Natural killer cell (primary cell): ENCODE measurements at regions of chr16 and their contacts with region 1.

Region 1: DNA sequence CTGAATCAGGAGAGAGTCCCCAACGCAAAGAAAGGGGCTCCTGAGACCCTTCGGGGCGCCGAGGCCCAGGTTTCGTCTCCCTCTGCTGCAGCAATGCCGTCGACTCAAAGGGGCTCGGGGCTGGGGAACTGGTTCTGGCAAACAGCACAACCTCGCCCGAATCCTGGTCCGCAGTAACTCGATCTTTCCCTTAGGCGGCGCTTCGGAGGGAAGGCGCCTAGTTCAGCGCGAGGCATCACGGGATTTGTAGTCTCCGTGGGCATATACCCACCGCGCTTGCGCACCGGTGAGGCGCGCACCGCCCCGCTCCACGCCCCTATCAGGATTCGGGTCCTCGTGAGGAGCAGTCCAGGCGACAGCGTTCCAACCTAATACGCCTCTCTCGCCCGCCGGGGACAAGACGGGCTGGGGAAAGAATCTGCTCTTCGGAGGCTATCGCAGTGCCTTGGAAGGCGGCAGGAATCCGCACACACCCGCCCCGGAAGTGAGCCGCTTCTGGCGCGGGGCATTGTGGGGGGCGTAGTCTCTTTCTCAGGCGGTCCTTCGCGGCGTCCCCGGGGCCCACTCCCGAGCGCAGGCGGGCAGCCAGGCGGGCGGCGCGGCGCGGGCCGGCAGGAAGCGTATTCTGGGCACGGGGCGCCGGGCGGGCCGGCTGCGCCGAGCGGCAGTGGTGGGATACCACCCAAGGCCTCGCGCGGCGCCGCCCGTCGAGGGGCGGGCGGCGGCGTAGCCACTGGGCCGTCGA is at the start of gene THAP11:
- DNase-seq: peak; percentile 92 to 98
- ATAC-seq: peak; percentile 63 to 83 (median 67)
- H3K4me3 ChIP-seq: peak within 1 kb of the TSS; percentile 88
- H3K4me3 Mint-ChIP-seq: peak within 1 kb of the TSS; percentile 94
- H3K27ac ChIP-seq: peak within 1 kb of the TSS; percentile 96
- H3K27ac Mint-ChIP-seq: peak within 1 kb of the TSS; percentile 89 to 93
- H3K4me1 ChIP-seq: peaks cover 45% of the 10 kb centered on the region
- H3K4me1 Mint-ChIP-seq: peaks cover 33 to 34% of the 10 kb centered on the region in 2 donors
- H3K27me3 ChIP-seq: no peaks in the 10 kb centered on the region
- H3K27me3 Mint-ChIP-seq: no peaks in the 10 kb centered on the region
- CTCF ChIP-seq: peak; percentile 80
- total RNA-seq, gene THAP11: 25.5 to 35.8 (median 30.3) TPM

Region 2: DNA sequence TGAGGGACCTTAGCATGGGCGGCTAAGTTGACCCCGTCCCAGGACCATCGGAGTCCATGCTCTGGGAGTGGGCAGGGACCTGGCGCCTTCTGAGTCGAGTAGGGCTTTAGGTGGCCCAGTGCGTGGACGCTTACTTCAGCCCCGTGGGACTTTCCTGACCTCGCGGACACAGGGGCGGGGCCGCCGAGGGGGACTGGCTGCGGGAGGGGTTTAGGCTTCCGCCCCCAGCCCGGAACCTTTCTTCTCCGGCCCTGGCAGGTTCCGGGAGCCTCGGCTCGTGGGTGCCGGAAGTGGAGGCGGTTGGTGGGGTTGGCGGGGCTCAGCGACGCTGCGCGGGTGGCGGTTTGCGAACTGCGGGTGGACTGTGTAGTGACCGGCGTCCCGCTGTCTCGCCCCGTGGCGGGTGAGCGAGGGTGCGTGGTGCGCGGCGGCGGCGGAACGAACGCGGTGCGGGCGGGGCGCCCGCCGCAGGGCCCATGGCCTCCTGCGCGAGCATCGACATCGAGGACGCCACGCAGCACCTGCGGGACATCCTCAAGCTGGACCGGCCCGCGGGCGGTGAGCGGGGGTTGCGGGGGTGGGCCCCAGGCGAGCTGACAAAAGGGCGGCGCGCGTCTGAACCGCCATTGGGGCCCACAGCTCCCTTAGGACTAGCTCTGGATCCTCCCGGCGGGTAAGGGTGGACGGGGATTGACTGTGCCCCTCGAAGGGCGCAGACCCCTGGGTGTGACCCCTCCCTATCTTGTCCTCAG is 31.0 kb after region 1 on chr16 and contains the start of gene EDC4:
- intact Hi-C with region 1: loop called (anchors 2 kb)
- DNase-seq: peak; percentile 91
- ATAC-seq: peak; percentile 92 to 96 (median 94)
- H3K4me3 ChIP-seq: peak within 1 kb of the TSS; percentile 89
- H3K4me3 Mint-ChIP-seq: peak within 1 kb of the TSS; percentile 92
- H3K27ac ChIP-seq: peak within 1 kb of the TSS; percentile 86
- H3K27ac Mint-ChIP-seq: peak within 1 kb of the TSS; percentile 90
- H3K4me1 ChIP-seq: peaks cover 24% of the 10 kb centered on the region
- H3K4me1 Mint-ChIP-seq: peaks cover 27 to 37% of the 10 kb centered on the region in 2 donors
- H3K27me3 ChIP-seq: no peaks in the 10 kb centered on the region
- H3K27me3 Mint-ChIP-seq: no peaks in the 10 kb centered on the region
- CTCF ChIP-seq: no peak
- total RNA-seq, gene EDC4: 91.9 to 111 (median 105) TPM

Region 3: DNA sequence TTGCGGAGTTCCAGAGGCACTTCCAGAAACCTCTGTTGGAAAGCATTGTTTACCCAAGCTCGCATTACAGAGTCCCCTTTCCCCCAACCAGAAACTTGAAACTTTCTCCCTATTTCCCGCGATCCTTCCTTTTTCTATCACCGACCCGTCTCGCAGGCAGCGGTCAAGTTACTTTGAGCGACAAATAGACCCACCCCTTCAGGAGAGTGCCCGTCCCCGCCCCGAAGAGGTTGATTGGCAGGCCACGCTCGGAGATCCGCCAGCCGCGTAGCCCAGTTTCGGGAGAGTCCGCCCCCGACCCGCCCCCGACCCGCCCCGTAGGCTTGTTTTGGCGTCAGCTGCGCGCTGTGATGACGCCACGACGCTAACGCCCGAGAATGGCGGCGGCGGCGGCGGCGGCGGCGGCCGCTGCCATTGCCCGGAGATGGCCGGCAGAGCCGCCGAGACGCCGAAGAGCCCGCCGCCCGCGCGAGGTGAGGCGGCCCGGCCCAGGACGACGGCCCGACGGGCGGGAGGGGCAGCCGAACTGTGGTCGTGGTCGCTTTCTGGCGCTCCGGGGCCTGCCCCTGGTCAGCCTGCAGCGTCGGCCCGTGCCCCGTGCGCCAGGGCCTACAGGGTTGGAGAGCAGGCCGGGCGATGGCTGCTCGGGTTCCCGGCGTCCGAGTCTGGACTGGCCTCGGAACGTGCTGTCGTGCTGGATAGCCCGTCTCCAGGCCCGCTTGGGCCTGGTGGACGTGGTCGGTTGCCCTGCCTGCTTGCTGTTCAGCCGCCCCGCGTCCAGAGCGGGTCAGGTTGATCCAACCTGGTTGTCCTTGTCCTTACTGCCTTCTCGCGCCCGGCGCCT is 51.2 kb after region 1 on chr16 and contains the start of gene PSKH1:
- intact Hi-C with region 1: loop called (anchors 1 kb)
- DNase-seq: peak; percentile 86 to 96
- ATAC-seq: peak; percentile 98 to 99 (median 98)
- H3K4me3 ChIP-seq: peak within 1 kb of the TSS; percentile 65
- H3K4me3 Mint-ChIP-seq: peak within 1 kb of the TSS; percentile 96
- H3K27ac ChIP-seq: peak within 1 kb of the TSS; percentile 83
- H3K27ac Mint-ChIP-seq: peak within 1 kb of the TSS; percentile 91 to 95
- H3K4me1 ChIP-seq: peaks cover 17% of the 10 kb centered on the region
- H3K4me1 Mint-ChIP-seq: peaks cover 28 to 31% of the 10 kb centered on the region in 2 donors
- H3K27me3 ChIP-seq: no peaks in the 10 kb centered on the region
- H3K27me3 Mint-ChIP-seq: no peaks in the 10 kb centered on the region
- CTCF ChIP-seq: no peak
- total RNA-seq, gene PSKH1: 16.8 to 24.7 (median 19.5) TPM